Naive thymus-derived CD4-positive, alpha-beta T cell (primary cell): ENCODE measurements at regions of chr2 and their contacts with region 1.

Region 1: DNA sequence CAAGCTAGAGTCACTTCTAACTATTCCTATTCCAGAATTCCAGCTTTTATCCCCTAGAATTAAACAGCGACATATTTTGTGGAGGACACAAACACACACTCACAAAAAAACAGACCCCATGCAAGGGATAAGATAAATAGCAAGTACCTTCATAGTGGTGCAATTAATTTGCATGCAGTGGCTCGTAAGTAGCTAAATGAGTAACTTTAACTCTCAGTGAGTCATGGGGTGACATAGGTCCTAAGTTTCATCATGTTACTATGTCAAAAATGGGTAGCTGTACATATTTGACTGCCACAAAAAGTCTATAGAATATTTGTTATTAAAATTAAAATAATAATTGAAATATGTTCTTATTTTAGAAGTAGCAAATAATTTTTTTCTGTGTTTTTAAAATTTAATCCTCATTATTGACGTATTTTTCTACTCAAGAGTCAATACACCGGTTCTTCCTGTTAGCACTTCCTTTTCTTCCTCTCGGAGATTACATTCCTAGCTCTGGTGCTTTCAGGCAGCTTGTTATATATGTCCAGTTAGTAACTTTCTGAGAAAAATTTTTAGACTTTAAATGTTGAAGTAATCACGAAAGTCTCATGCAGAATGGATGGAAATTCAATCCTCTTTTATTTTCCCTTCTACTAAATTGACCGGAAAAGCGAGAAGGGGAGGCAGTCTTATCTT is 247.0 kb downstream of the KCNH7 start:
- DNase-seq: no peak
- ATAC-seq: no peak
- H3K4me3 ChIP-seq: no peak overlapping the region
- H3K4me3 Mint-ChIP-seq: no peak overlapping the region
- H3K27ac ChIP-seq: no peak overlapping the region
- H3K27ac Mint-ChIP-seq: no peak overlapping the region
- H3K4me1 ChIP-seq: no peaks in the 10 kb centered on the region
- H3K4me1 Mint-ChIP-seq: no peaks in the 10 kb centered on the region
- H3K27me3 ChIP-seq: no peaks in the 10 kb centered on the region
- H3K27me3 Mint-ChIP-seq: no peaks in the 10 kb centered on the region

Region 2: GRCh38 chr2:161486111-161486510 is 1105.4 kb before region 1 on chr2:
- CTCF ChIA-PET with region 1: no interaction called
- POLR2A ChIA-PET with region 1: no interaction called
- intact Hi-C with region 1: loop called in 1 of 2 experiments (anchors 10 kb)
- DNase-seq: no peak
- ATAC-seq: no peak
- H3K4me3 ChIP-seq: no peak overlapping the region
- H3K4me3 Mint-ChIP-seq: no peak overlapping the region
- H3K27ac ChIP-seq: no peak overlapping the region
- H3K27ac Mint-ChIP-seq: no peak overlapping the region
- H3K4me1 ChIP-seq: no peaks in the 10 kb centered on the region
- H3K4me1 Mint-ChIP-seq: no peaks in the 10 kb centered on the region
- H3K27me3 ChIP-seq: no peaks in the 10 kb centered on the region
- H3K27me3 Mint-ChIP-seq: peaks cover 14 to 33% (median 18%) of the 10 kb centered on the region in 5 donors